ENCODE measurements at regions of chr5 and their contacts with region 1.

Region 1: GRCh38 chr5:57435701-57436134 is 46.9 kb downstream of the ACTBL2 start:
- DNase-seq: peak; percentile 60
- H3K4me3 Mint-ChIP-seq: peak overlapping the region; percentile 10
- H3K27ac Mint-ChIP-seq: peak overlapping the region; percentile 87
- H3K4me1 Mint-ChIP-seq: peaks cover 57% of the 10 kb centered on the region
- H3K27me3 Mint-ChIP-seq: no peaks in the 10 kb centered on the region
- CTCF ChIP-seq: no peak

Region 2: GRCh38 chr5:57298295-57298984 is 137.3 kb before region 1 on chr5:
- CTCF ChIA-PET with region 1: interaction called, 4 read pairs
- intact Hi-C with region 1: loop called (anchors 1 kb)
- DNase-seq: peak; percentile 92
- H3K4me3 Mint-ChIP-seq: no peak overlapping the region
- H3K27ac Mint-ChIP-seq: peak overlapping the region; percentile 40
- H3K4me1 Mint-ChIP-seq: peaks cover 53% of the 10 kb centered on the region
- H3K27me3 Mint-ChIP-seq: no peaks in the 10 kb centered on the region
- CTCF ChIP-seq: peak; percentile 64

Region 3: GRCh38 chr5:57366744-57367143 is 69.0 kb before region 1 on chr5:
- CTCF ChIA-PET with region 1: interaction called, 4 read pairs
- intact Hi-C with region 1: loop called (anchors 1 kb)
- DNase-seq: peak; percentile 51
- H3K4me3 Mint-ChIP-seq: no peak overlapping the region
- H3K27ac Mint-ChIP-seq: no peak overlapping the region
- H3K4me1 Mint-ChIP-seq: peaks cover 22% of the 10 kb centered on the region
- H3K27me3 Mint-ChIP-seq: no peaks in the 10 kb centered on the region
- CTCF ChIP-seq: no peak

Region 4: DNA sequence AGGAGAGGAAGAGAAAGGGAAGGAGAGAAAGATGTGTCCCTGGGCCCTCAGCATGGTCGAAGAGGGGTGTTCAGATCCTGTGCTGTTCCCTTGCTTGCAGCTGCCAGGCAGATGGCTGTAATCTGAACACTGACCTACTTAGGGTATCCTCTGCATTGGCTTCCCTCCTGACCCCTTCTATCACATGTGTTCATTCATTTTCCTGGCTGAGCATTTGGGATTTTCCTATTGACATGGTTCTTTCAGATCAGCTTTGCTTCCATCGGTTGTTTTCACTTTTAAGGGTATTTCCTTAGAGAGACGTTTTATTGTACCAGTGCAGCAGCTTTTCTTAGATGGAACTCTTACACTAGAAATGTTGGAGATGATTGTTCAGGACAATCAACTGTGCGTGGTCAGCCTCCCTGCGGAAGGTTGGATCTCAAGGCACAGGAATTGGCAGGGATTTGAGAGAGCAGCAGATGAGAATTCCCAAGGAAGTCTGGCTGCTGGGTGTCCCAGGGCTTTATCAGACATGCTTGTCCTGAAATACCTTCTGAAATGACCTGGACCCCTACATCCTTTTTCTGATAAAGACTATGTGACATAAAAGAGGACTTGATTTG is 20.9 kb after region 1 on chr5:
- CTCF ChIA-PET with region 1: interaction called, 3 read pairs
- intact Hi-C with region 1: loop called (anchors 1 kb)
- DNase-seq: peak; percentile 6
- H3K4me3 Mint-ChIP-seq: peak overlapping the region; percentile 6
- H3K27ac Mint-ChIP-seq: peak overlapping the region; percentile 71
- H3K4me1 Mint-ChIP-seq: peaks cover 54% of the 10 kb centered on the region
- H3K27me3 Mint-ChIP-seq: no peaks in the 10 kb centered on the region
- CTCF ChIP-seq: no peak

Region 5: GRCh38 chr5:57692582-57693487 is 257.1 kb after region 1 on chr5:
- CTCF ChIA-PET with region 1: no interaction called
- intact Hi-C with region 1: loop called (anchors 5 kb)
- DNase-seq: peak; percentile 86
- H3K4me3 Mint-ChIP-seq: peak overlapping the region; percentile 71
- H3K27ac Mint-ChIP-seq: peak overlapping the region; percentile 98
- H3K4me1 Mint-ChIP-seq: peaks cover 51% of the 10 kb centered on the region
- H3K27me3 Mint-ChIP-seq: no peaks in the 10 kb centered on the region
- CTCF ChIP-seq: no peak

Region 6: GRCh38 chr5:57887851-57888621 is 452.3 kb after region 1 on chr5:
- CTCF ChIA-PET with region 1: no interaction called
- intact Hi-C with region 1: loop called (anchors 10 kb)
- DNase-seq: peak; percentile 53
- H3K4me3 Mint-ChIP-seq: no peak overlapping the region
- H3K27ac Mint-ChIP-seq: no peak overlapping the region
- H3K4me1 Mint-ChIP-seq: peaks cover 17% of the 10 kb centered on the region
- H3K27me3 Mint-ChIP-seq: no peaks in the 10 kb centered on the region
- CTCF ChIP-seq: no peak

Measured in Calu3 (cell line).